ENCODE measurements at regions of chr2 and their contacts with region 1.

Region 1: DNA sequence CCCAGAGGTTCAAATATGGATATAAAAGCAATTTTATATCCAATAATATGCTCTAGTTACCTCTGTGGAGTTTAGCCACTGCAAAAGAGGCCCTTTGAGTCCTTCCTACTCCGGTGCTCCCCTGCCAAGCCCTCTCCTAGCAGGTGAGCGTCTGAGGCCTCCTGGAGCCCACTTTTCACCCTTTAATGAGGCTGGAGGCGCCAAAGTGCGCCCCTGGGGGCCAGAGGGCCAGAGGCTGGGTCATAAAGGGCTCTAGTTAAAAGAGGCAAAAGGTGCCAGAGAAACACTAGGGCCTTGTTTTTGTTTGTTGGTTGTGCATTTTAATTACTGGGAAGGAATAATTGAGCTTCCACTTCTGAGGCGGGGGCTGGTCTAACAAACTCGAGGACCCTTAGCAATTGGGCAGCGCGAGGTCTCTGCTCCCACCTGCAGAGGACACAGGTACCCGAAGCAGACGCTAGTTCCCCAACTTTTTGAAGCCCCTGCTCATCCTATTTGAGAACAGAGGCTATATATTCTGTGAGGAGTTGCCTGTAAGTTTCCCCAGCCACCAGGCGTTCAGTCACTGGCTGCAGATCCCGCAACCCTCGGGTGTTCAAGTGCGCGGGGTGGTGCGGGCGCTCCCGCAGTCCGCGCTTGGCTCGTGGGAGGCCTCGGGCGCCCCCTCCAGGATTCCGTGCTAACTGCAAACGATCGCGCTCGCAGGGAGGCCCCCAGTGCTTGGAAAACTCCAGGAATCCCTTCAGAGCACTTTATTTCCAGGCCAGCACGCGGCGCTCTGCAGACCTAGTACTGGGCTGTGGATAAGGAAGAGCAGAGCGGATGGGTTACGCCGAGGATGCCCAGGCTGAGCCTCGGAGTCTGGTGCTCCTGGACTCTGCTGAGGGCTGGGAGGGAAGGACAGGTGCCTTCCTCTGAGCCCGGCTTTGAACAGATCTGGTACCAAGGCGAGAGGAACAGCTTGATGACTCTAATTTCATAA is 14.1 kb downstream of the MSGN1 start:
- DNase-seq: peak; percentile 86
- H3K4me3 ChIP-seq: no peak overlapping the region
- H3K27ac ChIP-seq: no peak overlapping the region
- H3K4me1 ChIP-seq: peaks cover 7% of the 10 kb centered on the region
- H3K27me3 ChIP-seq: peaks cover 3% of the 10 kb centered on the region
- CTCF ChIP-seq: peak; percentile 90

Region 2: GRCh38 chr2:17719562-17720371 is 110.6 kb before region 1 on chr2:
- intact Hi-C with region 1: loop called (anchors 5 kb)
- DNase-seq: no peak
- H3K4me3 ChIP-seq: no peak overlapping the region
- H3K27ac ChIP-seq: no peak overlapping the region
- H3K4me1 ChIP-seq: no peaks in the 10 kb centered on the region
- H3K27me3 ChIP-seq: no peaks in the 10 kb centered on the region
- CTCF ChIP-seq: peak; percentile 88

Measured in colonic mucosa (tissue), 4 donors.